ENCODE measurements at regions of chr12 and their contacts with region 1.

Region 1: GRCh38 chr12:31749024-31749704 is 20.3 kb upstream of the AMN1 start:
- DNase-seq: peak; percentile 99
- ATAC-seq: peak; percentile 81
- H3K4me3 ChIP-seq: no peak overlapping the region
- H3K27ac ChIP-seq: peak overlapping the region; percentile 77
- H3K4me1 ChIP-seq: peaks cover 55% of the 10 kb centered on the region
- H3K27me3 ChIP-seq: no peaks in the 10 kb centered on the region
- CTCF ChIP-seq: no peak
- EP300 ChIP-seq: peak; percentile 94 to 97
- POLR2A ChIP-seq: peak; percentile 66
- RAD21 ChIP-seq: peak; percentile 25; the same call in 1 of the 2 replicates

Region 2: GRCh38 chr12:31659087-31659933 is 89.9 kb before region 1 on chr12 and contains the start of gene ETFBKMT:
- CTCF ChIA-PET with region 1: interaction called, 3 read pairs
- POLR2A ChIA-PET with region 1: interaction called, 4 read pairs
- RAD21 ChIA-PET with region 1: interaction called, 10 read pairs
- SMC1A ChIA-PET with region 1: interaction called, 5 read pairs
- in situ Hi-C with region 1: no loop called
- intact Hi-C with region 1: no loop called
- DNase-seq: peak; percentile 90
- ATAC-seq: peak; percentile 99
- H3K4me3 ChIP-seq: peak within 1 kb of the TSS; percentile 85
- H3K27ac ChIP-seq: peak within 1 kb of the TSS; percentile 87
- H3K4me1 ChIP-seq: peaks cover 5% of the 10 kb centered on the region; the same call in 1 of the 2 replicates
- H3K27me3 ChIP-seq: no peaks in the 10 kb centered on the region
- CTCF ChIP-seq: peak; percentile 18 to 34 (median 22); a peak in 4 of 6 replicates
- EP300 ChIP-seq: no peak
- POLR2A ChIP-seq: peak; percentile 54; the same call in 1 of the 2 replicates
- RAD21 ChIP-seq: no peak
- polyA plus RNA-seq, gene ETFBKMT: 0.49 to 0.79 TPM

Region 3: GRCh38 chr12:31728917-31729640 is 20.1 kb before region 1 on chr12 and contains the start of gene AMN1:
- CTCF ChIA-PET with region 1: interaction called, 19 read pairs
- POLR2A ChIA-PET with region 1: interaction called, 82 read pairs
- RAD21 ChIA-PET with region 1: interaction called, 49 read pairs
- SMC1A ChIA-PET with region 1: interaction called, 66 read pairs
- in situ Hi-C with region 1: no loop called
- intact Hi-C with region 1: loop called (anchors 1 kb)
- DNase-seq: peak; percentile 99
- ATAC-seq: peak; percentile 96
- H3K4me3 ChIP-seq: peak within 1 kb of the TSS; percentile 79
- H3K27ac ChIP-seq: peak within 1 kb of the TSS; percentile 97
- H3K4me1 ChIP-seq: peaks cover 17% of the 10 kb centered on the region
- H3K27me3 ChIP-seq: no peaks in the 10 kb centered on the region
- CTCF ChIP-seq: no peak
- EP300 ChIP-seq: peak in 1 of 2 experiments; percentile 46; a peak in 1 of 4 replicates
- POLR2A ChIP-seq: peak; percentile 92
- RAD21 ChIP-seq: no peak
- polyA plus RNA-seq, gene AMN1: 15.2 to 19.3 TPM

Region 4: GRCh38 chr12:31773867-31774266 is 24.7 kb after region 1 on chr12:
- CTCF ChIA-PET with region 1: no interaction called
- POLR2A ChIA-PET with region 1: interaction called, 10 read pairs
- RAD21 ChIA-PET with region 1: interaction called, 5 read pairs
- SMC1A ChIA-PET with region 1: interaction called, 25 read pairs
- in situ Hi-C with region 1: no loop called
- intact Hi-C with region 1: no loop called
- DNase-seq: peak; percentile 57
- ATAC-seq: peak; percentile 92
- H3K4me3 ChIP-seq: no peak overlapping the region
- H3K27ac ChIP-seq: peak overlapping the region; percentile 1; the same call in 1 of the 2 replicates
- H3K4me1 ChIP-seq: peaks cover 14% of the 10 kb centered on the region
- H3K27me3 ChIP-seq: no peaks in the 10 kb centered on the region
- CTCF ChIP-seq: no peak
- EP300 ChIP-seq: no peak
- POLR2A ChIP-seq: no peak
- RAD21 ChIP-seq: no peak

Region 5: GRCh38 chr12:31813305-31813704 is 64.1 kb after region 1 on chr12:
- CTCF ChIA-PET with region 1: interaction called, 9 read pairs
- POLR2A ChIA-PET with region 1: interaction called, 66 read pairs
- RAD21 ChIA-PET with region 1: interaction called, 112 read pairs
- SMC1A ChIA-PET with region 1: interaction called, 46 read pairs
- in situ Hi-C with region 1: no loop called
- intact Hi-C with region 1: loop called (anchors 1 kb)
- DNase-seq: no peak
- ATAC-seq: no peak
- H3K4me3 ChIP-seq: no peak overlapping the region
- H3K27ac ChIP-seq: no peak overlapping the region
- H3K4me1 ChIP-seq: peaks cover 22% of the 10 kb centered on the region
- H3K27me3 ChIP-seq: no peaks in the 10 kb centered on the region
- CTCF ChIP-seq: peak in 2 of 3 experiments; percentile 15 to 18; a peak in 1 of 6 replicates
- EP300 ChIP-seq: no peak
- POLR2A ChIP-seq: no peak
- RAD21 ChIP-seq: peak; percentile 37; the same call in 1 of the 2 replicates

Region 6: GRCh38 chr12:31959161-31959700 is 210.1 kb after region 1 on chr12 and contains the start of gene RESF1:
- CTCF ChIA-PET with region 1: no interaction called
- POLR2A ChIA-PET with region 1: interaction called, 6 read pairs
- RAD21 ChIA-PET with region 1: interaction called, 16 read pairs
- SMC1A ChIA-PET with region 1: interaction called, 3 read pairs
- in situ Hi-C with region 1: no loop called
- intact Hi-C with region 1: loop called (anchors 5 kb)
- DNase-seq: peak; percentile 57
- ATAC-seq: peak; percentile 92
- H3K4me3 ChIP-seq: peak within 1 kb of the TSS; percentile 86
- H3K27ac ChIP-seq: peak within 1 kb of the TSS; percentile 76
- H3K4me1 ChIP-seq: peaks cover 12% of the 10 kb centered on the region; the same call in 1 of the 2 replicates
- H3K27me3 ChIP-seq: no peaks in the 10 kb centered on the region
- CTCF ChIP-seq: no peak
- EP300 ChIP-seq: no peak
- POLR2A ChIP-seq: peak; percentile 81
- RAD21 ChIP-seq: no peak
- polyA plus RNA-seq, gene RESF1: 18.9 to 23.6 TPM